Left cardiac atrium (tissue), 4 donors: ENCODE measurements at regions of chr9 and their contacts with region 1.

Region 1: GRCh38 chr9:130770679-130771442 is 64.2 kb upstream of the ABL1 start:
- DNase-seq: no peak
- ATAC-seq: peak; percentile 70 to 79

Region 2: DNA sequence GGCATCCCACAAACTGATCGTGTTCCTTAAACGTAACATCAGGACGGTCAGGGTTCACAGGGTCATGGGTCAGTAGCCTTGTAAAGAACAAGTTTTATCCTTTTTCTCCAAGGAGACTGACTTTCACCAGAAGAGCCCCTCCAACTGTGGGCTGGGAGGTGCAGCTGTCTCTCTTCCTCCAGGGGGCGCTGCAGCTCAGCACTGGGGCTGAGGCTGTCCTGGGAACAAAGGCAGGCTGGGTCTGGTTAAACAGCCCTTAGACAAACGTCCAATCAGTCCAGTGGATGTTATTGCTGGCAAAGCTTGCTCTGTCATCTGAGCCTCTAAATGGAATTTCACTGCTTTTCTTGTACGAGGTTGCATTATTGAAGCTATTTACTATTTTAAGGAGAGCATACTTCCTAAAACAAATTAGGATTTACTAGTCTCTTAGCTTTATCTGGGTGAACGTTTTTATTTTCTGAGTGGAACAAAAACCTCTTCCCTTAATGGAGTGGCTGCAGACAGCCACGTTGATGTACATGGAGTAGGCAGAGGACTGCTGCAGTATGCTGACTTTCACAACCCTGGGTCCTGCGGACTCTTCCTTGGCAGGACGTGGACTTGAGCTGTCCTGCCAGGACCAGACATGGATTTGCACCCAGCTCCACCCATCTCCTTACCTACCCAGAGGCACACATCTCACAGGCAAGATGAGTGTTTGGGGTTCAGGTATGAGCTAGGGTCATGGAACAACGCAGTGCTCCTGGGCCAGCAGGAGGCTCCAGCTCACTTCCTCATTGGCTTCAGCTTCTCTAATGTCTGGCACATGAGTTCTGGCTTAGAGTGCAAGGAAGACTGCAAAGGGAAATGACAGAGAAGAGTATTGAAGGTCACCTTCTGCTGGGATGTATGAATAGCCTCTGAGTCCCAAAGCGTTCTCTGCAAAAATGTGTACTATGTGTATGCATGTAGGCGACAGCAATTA is 69.5 kb before region 1 on chr9:
- intact Hi-C with region 1: no loop called
- DNase-seq: peak; percentile 88
- ATAC-seq: peak; percentile 92 to 96

Region 3: DNA sequence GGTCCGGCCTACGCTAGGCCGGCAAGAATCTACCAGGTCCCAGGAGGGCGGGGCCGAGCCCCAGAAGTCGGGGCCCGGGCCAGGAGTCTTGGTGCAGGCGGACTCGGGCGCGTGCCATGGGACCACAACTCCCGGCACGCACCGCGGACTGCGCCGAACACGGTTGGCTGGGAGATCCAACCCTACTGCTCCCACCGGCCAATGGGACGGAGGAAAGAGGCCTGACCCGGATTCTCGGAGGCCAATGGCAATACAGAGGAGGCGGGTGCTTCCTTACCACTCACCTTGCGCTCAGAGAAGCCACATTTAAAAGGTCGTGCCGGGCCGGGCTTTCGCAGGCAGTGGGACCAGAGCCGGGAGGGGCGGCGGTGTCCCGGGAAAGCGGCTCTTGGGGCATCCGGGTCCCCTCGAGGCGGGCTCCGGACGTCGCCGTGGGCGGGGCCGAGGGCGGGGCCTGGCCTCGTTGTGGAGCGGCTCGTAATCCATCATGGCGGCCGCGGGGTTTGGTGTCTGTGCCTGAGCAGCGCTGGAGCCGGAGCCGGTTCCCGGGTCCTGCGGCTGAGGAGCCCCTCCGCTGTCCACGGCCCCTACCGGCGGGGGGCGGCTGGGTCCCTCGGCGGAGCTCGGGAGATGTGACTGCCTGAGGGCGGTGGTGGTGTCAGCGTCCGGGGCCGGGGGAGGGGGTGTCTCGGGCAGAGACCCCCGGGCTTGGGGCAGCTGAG is 58.1 kb before region 1 on chr9:
- intact Hi-C with region 1: loop called in 1 of 2 experiments (anchors 5 kb)
- DNase-seq: peak; percentile 99
- ATAC-seq: peak; percentile 97 to 98

Region 4: DNA sequence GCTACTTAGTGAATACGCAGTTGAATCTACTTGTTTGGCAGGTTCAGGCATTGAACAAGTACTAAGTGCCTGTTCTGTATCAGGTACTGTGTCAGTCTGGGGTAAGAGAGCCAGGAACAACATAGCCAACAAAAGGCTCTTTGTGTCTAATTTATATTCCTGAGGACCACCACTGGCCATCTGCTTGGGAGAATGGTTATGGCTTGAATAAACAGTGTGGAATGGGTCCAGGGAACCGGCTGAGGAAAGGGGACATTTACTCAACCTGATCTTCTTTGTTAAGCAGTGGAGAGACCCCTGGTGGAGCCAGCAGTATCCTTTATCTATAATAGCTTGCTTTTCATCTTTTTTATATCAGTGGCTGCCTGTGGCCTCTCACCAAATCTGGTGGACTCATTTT is 38.7 kb before region 1 on chr9:
- intact Hi-C with region 1: loop called in 1 of 2 experiments (anchors 5 kb)
- DNase-seq: no peak
- ATAC-seq: peak in 1 of 2 donors; percentile 47

Region 5: DNA sequence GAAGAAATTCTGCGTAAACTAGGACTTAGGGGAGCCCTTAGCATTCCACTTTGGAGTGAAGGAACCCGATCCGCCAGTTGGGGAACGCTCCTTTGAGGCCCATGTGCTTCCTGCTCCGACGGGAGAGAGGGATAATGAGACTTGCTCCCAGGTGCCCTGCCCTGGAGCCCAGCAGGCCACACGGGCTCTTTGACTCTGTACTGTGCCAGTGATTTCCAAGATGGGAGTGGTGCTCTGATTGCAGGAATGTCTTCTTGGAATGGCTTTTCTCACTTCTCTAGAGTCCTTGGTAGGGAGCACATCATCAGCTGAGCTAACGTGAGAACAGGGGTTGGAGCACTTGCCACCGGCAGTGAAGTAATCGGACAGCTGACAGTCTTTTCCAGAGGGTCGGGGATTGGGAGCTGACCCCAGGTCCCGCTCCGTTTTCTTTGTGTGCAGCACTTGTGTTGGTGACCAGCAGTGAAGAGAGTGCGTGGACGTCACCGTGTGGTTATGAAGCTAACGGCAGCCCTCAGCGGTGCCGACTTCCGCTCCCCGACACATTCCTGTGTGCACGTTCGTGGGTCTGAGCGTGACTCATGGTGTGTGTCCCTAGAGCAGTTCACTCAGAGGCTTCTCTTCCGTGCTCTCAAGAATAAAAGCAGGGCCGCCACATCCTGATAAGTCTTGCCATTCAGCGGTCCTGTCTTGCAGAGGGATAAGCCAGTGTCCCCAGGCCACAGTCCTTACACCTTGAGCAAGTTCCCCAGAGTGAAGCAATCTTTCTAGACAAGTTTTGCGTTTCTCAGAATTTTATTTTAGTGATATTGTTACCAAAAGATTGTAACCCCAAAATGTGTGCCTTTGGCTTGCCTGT is 89.8 kb after region 1 on chr9:
- intact Hi-C with region 1: loop called (anchors 5 kb)
- DNase-seq: peak; percentile 92
- ATAC-seq: peak; percentile 90 to 95